Heart left ventricle (tissue), 16 donors: ENCODE measurements at regions of chr19 and their contacts with region 1.

Region 1: GRCh38 chr19:49210108-49210900 is 52.7 kb downstream of the TRPM4 start:
- DNase-seq: no peak
- ATAC-seq: peak in 3 of 4 donors; percentile 31 to 55 (median 36)
- H3K4me3 ChIP-seq: no peak overlapping the region
- H3K27ac ChIP-seq: peak overlapping the region in 2 of 12 donors; percentile 15 to 47
- H3K4me1 ChIP-seq: peaks cover 0 to 26% (median 9%) of the 10 kb centered on the region in 12 donors
- H3K27me3 ChIP-seq: no peaks in the 10 kb centered on the region
- CTCF ChIP-seq: no peak
- POLR2A ChIP-seq: no peak

Region 2: DNA sequence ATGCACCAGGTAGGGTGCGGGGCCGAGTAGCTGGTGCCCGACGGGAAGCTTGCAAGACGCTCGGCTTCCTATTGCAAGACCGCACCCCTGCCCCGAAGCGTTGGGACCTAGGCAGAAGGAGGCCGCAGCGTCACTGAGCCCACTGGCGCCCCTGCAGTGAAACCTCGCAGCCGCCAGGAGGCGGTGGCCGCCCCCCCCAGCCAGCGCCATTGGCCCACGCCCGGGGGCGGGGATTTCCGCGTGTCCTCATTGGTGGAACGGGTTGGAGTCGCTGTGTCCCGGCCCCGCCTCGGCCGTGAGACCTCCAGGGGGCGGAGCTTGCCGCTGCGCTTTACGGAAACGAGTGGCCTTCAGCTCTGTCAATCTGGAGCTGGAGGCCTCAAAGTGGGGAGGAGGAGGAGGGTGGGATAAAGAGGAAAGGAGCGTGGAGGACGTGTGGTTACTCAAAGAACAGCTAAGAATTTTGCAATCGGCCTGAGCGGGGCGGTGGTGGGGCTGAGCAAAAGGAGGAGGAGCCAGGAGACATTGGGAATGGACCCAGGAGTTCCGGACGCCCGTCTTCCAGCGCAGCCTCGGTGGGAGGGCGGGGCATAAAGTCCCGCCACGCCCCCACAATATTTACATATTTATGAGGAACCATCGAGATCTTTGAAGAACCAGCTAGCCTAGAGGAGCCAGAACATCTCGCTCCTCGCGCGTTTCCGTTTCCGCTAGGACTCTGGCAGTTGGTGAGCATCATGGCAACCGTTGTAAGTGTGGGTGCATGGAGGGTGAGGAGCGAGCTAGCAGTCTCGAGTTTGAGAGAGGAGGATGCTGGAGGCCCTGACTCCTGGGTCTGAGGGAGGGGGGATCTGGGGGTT is 216.9 kb before region 1 on chr19 and contains the starts of genes GYS1 and RUVBL2:
- intact Hi-C with region 1: loop called in 3 of 10 experiments (anchors 10 kb)
- DNase-seq: peak; percentile 99 to 100 (median 100)
- ATAC-seq: peak; percentile 91 to 94 (median 94)
- H3K4me3 ChIP-seq: peak within 1 kb of the TSS; percentile 56 to 99 (median 82)
- H3K27ac ChIP-seq: peak within 1 kb of the TSS; percentile 86 to 99 (median 96)
- H3K4me1 ChIP-seq: peaks cover 6 to 51% (median 35%) of the 10 kb centered on the region in 12 donors
- H3K27me3 ChIP-seq: no peaks in the 10 kb centered on the region
- CTCF ChIP-seq: peak; percentile 92 to 100 (median 98)
- POLR2A ChIP-seq: peak; percentile 77 to 98
- total RNA-seq, gene GYS1: 125 to 264 (median 173) TPM
- total RNA-seq, gene RUVBL2: 41.4 to 93.9 (median 50.9) TPM

Region 3: DNA sequence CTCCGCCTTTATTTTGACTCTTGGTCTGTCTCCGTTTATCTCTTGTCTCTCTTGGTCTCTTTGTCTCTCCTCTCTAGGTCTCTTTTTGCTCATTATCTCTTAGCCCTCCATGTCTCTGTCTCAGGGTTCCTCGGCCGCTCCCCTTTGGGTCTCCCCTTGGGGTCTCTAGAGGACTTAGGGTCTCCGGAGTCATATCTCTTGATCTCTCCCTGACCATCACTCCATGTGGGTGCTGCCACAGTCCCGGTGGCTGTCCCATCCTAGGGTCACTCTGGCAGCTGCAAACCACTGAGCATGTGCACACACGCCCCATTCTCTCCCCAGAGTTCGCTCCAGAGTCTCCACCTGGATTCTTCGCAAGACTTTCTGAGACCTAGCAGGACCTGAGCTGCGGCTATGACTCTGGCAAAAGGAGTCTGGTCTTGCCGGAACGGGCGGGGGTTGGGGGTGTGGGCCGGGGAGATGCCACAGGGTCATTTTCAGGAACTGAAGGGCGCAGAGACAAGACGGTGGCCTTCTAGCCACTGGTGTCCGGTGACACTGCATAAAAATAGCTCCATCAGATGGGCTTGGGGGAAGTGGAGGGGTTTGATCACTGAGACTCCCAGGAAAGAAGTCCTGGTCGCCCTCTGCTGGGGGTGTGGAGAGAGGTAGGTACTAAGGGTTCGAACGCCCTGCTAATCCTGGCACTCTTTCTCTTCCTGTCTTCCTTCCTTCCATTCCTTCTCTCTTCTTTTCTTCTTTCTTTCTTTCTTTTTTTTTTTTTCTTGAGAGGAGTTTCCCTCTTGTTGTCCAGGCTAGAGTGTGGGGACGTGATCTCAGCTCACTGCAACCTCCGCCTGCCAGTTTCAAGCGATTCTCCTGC is 136.6 kb before region 1 on chr19:
- intact Hi-C with region 1: loop called in 1 of 10 experiments (anchors 2 kb)
- DNase-seq: no peak
- ATAC-seq: peak in 3 of 4 donors; percentile 50 to 77 (median 60)
- H3K4me3 ChIP-seq: no peak overlapping the region
- H3K27ac ChIP-seq: no peak overlapping the region
- H3K4me1 ChIP-seq: peaks cover 0 to 20% (median 1%) of the 10 kb centered on the region in 12 donors
- H3K27me3 ChIP-seq: peaks cover 9 to 59% (median 24%) of the 10 kb centered on the region in 9 donors
- CTCF ChIP-seq: peak in 2 of 12 donors; percentile 9 to 14
- POLR2A ChIP-seq: no peak

Region 4: DNA sequence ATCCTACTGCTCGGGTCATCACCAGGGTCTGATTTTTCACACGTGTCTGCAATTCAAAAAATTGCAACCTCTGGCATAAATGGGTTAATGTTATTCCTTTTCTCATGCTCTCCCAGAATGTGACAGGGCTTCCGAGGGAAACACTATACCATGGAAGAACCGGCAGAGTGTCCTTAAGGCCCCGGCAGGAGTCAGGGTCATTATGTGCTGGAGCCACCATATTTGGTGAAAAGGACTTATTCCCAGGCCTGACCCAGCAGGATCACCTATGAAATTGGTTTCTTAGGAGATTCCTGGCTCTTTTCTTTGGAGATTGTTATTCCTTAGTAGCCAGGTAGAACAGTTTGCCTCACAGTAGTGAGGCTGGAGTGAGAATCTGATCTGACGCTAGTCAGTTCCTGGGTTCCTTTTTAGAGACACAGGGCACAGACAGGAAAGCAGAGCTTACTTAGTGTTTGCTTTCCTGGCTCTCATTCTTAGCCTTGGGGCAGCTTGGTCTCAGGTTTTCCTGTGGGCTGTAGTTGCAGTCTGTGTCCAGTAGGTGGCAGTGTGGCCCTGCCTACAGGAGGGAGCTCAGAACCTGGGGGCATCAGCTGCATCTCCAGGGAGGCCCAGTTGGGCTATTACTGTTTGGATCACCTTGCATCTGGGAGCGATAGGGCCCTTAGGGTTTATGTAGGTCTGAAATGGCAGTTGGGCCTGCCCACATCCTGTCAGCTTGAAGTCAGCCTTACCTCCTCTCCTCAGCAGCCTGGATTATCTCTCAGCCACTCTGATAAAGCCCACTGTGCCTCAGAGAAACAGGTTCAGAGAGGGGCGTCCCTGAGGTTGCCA is 112.6 kb before region 1 on chr19:
- intact Hi-C with region 1: loop called in 6 of 10 experiments (anchors 2 to 5 kb)
- DNase-seq: peak; percentile 54 to 73 (median 62)
- ATAC-seq: peak; percentile 37 to 66 (median 57)
- H3K4me3 ChIP-seq: no peak overlapping the region
- H3K27ac ChIP-seq: no peak overlapping the region
- H3K4me1 ChIP-seq: peaks cover 0 to 32% (median 19%) of the 10 kb centered on the region in 12 donors
- H3K27me3 ChIP-seq: no peaks in the 10 kb centered on the region
- CTCF ChIP-seq: peak; percentile 97 to 100 (median 99)
- POLR2A ChIP-seq: no peak